Thyroid gland (tissue), 4 donors: ENCODE measurements at regions of chr17 and their contacts with region 1.

Region 1: DNA sequence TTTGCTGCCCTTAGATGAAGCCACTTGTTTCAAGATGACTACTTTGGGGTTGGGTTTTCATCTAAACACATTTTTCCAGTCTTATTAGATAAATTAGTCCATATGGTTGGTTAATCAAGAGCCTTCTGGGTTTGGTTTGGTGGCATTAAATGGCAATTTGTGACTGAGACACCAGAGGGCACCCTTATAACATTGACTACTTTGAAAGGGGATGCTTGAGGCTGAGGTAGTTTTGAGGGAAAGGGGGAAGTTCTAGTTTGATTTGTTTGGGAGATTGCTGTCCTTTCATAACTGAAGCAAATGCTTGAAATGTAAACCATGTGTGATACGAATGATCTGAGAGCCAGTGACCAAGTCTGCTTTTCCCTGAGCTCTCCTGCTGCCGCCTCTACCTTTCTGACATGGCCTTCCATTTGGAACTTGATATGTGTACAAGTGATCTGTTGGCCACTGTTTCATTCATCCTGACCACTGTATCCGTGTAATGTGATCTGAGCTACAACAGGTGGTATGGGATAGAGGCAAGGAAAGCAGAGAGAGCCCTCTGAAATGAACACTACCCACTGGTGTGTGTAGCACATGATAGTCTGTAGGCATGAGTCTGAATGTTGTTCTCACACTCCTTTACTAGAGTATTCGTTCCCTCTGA is 5.8 kb upstream of the RARA start:
- DNase-seq: peak in 1 of 2 donors; percentile 44
- H3K4me3 ChIP-seq: no peak overlapping the region
- H3K27ac ChIP-seq: peak overlapping the region in 2 of 3 donors; percentile 32 to 57
- H3K4me1 ChIP-seq: peaks cover 21 to 49% of the 10 kb centered on the region in 2 donors
- H3K27me3 ChIP-seq: no peaks in the 10 kb centered on the region
- CTCF ChIP-seq: peak in 5 of 6 experiments; percentile 18 to 96 (median 86)
- POLR2A ChIP-seq: no peak

Region 2: GRCh38 chr17:40355123-40355803 is 52.1 kb after region 1 on chr17:
- intact Hi-C with region 1: loop called (anchors 2 kb)
- DNase-seq: peak; percentile 69 to 71
- H3K4me3 ChIP-seq: no peak overlapping the region
- H3K27ac ChIP-seq: no peak overlapping the region
- H3K4me1 ChIP-seq: peaks cover 0 to 11% of the 10 kb centered on the region in 2 donors
- H3K27me3 ChIP-seq: no peaks in the 10 kb centered on the region
- CTCF ChIP-seq: peak; percentile 82 to 97 (median 93)
- POLR2A ChIP-seq: no peak

Region 3: GRCh38 chr17:40417609-40418427 is 114.7 kb after region 1 on chr17 and contains the start of gene TOP2A:
- intact Hi-C with region 1: loop called (anchors 10 kb)
- DNase-seq: peak; percentile 96 to 97
- H3K4me3 ChIP-seq: peak within 1 kb of the TSS in 2 of 3 donors; percentile 35 to 46
- H3K27ac ChIP-seq: peak within 1 kb of the TSS in 1 of 3 donors; percentile 51
- H3K4me1 ChIP-seq: peaks cover 5 to 10% of the 10 kb centered on the region in 2 donors
- H3K27me3 ChIP-seq: no peaks in the 10 kb centered on the region
- CTCF ChIP-seq: no peak
- POLR2A ChIP-seq: no peak
- total RNA-seq, gene TOP2A: 0.20 to 5.2 (median 2.2) TPM